ENCODE measurements at regions of chr15 and their contacts with region 1.

Region 1: DNA sequence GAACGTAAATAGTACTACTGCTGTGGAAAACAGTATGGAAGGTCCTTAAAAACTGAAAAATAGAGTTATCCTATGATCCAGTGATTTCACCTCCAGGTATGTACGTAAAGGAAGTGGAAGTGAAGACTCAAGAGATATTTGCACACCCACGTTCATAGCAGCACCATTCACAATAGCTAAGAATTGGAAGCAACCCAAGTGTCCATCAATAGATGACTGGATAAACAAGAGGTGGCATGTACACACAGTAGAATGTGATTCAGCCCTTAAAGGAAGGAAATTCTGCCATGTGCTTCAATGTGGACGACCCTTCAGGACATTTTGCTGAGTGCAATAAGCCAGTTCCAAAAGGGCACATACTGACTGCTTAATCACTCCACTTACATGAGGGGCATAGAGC is 188.3 kb downstream of the APBA2 start:
- DNase-seq: no peak

Region 2: GRCh38 chr15:28994831-28995596 is 79.0 kb before region 1 on chr15:
- intact Hi-C with region 1: loop called in 1 of 2 experiments (anchors 2 kb)
- DNase-seq: peak; percentile 45

Measured in posterior vena cava (tissue), 2 donors.